ENCODE measurements at regions of chr10 and their contacts with region 1.

Region 1: GRCh38 chr10:52779541-52780390 is 7.2 kb upstream of the MBL2 start:
- DNase-seq: peak; percentile 54 to 82 (median 79)
- ATAC-seq: peak; percentile 83
- H3K4me3 ChIP-seq: no peak overlapping the region
- H3K27ac ChIP-seq: no peak overlapping the region
- H3K4me1 ChIP-seq: no peaks in the 10 kb centered on the region
- H3K27me3 ChIP-seq: no peaks in the 10 kb centered on the region

Region 2: GRCh38 chr10:52644373-52645186 is 135.2 kb before region 1 on chr10:
- intact Hi-C with region 1: loop called in 1 of 4 experiments (anchors 5 kb)
- DNase-seq: peak in 2 of 3 donors; percentile 20 to 44
- ATAC-seq: peak; percentile 62
- H3K4me3 ChIP-seq: no peak overlapping the region
- H3K27ac ChIP-seq: no peak overlapping the region
- H3K4me1 ChIP-seq: no peaks in the 10 kb centered on the region
- H3K27me3 ChIP-seq: no peaks in the 10 kb centered on the region

Region 3: GRCh38 chr10:52701647-52702046 is 78.1 kb before region 1 on chr10:
- intact Hi-C with region 1: no loop called
- DNase-seq: no peak
- ATAC-seq: no peak
- H3K4me3 ChIP-seq: no peak overlapping the region
- H3K27ac ChIP-seq: no peak overlapping the region
- H3K4me1 ChIP-seq: no peaks in the 10 kb centered on the region
- H3K27me3 ChIP-seq: no peaks in the 10 kb centered on the region

Region 4: GRCh38 chr10:52740913-52741675 is 38.7 kb before region 1 on chr10:
- intact Hi-C with region 1: loop called in 3 of 4 experiments (anchors 5 kb)
- DNase-seq: peak; percentile 23 to 68 (median 53)
- ATAC-seq: peak; percentile 41 to 44
- H3K4me3 ChIP-seq: no peak overlapping the region
- H3K27ac ChIP-seq: no peak overlapping the region
- H3K4me1 ChIP-seq: no peaks in the 10 kb centered on the region
- H3K27me3 ChIP-seq: no peaks in the 10 kb centered on the region

Region 5: GRCh38 chr10:53052521-53053164 is 272.9 kb after region 1 on chr10:
- intact Hi-C with region 1: no loop called
- DNase-seq: no peak
- ATAC-seq: no peak
- H3K4me3 ChIP-seq: no peak overlapping the region
- H3K27ac ChIP-seq: no peak overlapping the region
- H3K4me1 ChIP-seq: no peaks in the 10 kb centered on the region
- H3K27me3 ChIP-seq: no peaks in the 10 kb centered on the region

Measured in right cardiac atrium (tissue), 5 donors.